Activated CD8-positive, alpha-beta T cell treated with anti-CD3 and anti-CD28 coated beads, Interleukin-2, amount 10 ng/mL, durations not matched to agents 7 days and 5 days (primary cell): ENCODE measurements at regions of chr18 and their contacts with region 1.

Region 1: DNA sequence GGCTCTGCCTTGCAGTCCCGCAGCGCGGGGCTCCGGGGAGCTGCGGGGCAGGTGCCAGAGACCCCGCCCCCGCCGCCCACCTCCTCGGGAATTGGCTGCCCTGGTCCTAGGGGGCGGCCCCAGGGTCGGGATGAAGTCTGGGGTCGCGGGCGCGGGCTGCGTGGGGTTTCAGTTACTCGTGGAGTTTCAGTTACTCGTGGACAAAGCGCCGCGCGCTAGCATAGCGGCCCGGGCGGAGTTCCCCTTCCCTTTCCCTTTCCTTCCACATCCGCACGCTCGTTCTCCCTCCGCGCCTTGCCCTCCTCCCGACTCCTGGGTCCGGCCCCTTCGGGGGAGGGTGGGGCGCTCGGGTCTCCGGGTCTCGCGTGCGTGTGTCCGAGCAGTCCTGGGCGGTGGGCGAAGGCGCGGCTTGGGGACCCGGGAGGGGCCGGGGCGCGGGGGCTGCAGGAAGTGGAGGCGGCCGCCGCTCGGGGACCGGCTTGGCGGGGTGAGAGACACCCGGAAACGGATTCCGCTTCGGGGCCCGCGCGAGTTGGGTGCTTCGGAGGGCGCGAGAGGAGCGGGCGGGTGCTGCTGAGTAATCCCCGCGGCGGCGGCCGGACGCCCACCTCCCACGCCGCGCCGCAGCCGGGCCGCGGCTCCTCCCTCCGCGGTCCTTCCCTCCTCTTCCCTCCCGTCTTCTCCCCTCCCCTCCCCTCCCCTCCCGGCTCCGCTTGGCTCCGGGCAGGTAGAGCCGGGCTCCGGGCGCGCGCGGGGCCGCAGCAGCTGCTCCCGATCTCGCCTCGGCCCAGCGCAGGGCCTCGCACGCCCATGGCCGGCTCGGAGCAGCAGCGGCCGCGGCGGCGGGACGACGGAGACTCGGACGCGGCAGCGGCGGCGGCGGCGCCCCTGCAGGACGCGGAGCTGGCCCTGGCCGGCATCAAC is at the start of gene TTC39C:
- DNase-seq: peak; percentile 89
- ATAC-seq: peak; percentile 73
- H3K4me3 Mint-ChIP-seq: peak within 1 kb of the TSS; percentile 95
- H3K27ac Mint-ChIP-seq: peak within 1 kb of the TSS; percentile 91
- H3K4me1 Mint-ChIP-seq: peaks cover 75% of the 10 kb centered on the region
- H3K27me3 Mint-ChIP-seq: no peaks in the 10 kb centered on the region
- total RNA-seq, gene TTC39C: 71.5 to 72.2 TPM

Region 2: DNA sequence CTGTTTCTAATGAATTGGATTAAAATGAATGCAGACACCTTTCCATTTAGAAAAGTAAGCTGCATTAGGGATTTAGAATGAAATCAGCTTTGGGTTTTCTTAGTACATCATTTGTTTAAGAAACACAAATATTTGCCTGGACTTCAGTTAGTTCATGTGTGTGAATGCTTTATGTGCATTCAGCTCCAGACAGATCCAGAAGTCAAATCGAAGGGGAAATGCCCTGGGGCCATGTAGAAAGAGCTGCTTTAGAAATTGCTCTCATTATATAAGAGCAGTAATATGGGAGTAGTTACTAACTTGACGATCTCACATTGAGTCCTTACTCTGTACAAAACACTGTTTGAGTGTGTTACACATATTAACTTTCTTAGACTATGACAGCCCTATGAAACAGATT is 87.8 kb before region 1 on chr18:
- CTCF ChIA-PET with region 1: interaction called, 3 read pairs
- POLR2A ChIA-PET with region 1: interaction called, 11 read pairs
- DNase-seq: no peak
- ATAC-seq: no peak
- H3K4me3 Mint-ChIP-seq: no peak overlapping the region
- H3K27ac Mint-ChIP-seq: no peak overlapping the region
- H3K4me1 Mint-ChIP-seq: peaks cover 44% of the 10 kb centered on the region
- H3K27me3 Mint-ChIP-seq: no peaks in the 10 kb centered on the region

Region 3: DNA sequence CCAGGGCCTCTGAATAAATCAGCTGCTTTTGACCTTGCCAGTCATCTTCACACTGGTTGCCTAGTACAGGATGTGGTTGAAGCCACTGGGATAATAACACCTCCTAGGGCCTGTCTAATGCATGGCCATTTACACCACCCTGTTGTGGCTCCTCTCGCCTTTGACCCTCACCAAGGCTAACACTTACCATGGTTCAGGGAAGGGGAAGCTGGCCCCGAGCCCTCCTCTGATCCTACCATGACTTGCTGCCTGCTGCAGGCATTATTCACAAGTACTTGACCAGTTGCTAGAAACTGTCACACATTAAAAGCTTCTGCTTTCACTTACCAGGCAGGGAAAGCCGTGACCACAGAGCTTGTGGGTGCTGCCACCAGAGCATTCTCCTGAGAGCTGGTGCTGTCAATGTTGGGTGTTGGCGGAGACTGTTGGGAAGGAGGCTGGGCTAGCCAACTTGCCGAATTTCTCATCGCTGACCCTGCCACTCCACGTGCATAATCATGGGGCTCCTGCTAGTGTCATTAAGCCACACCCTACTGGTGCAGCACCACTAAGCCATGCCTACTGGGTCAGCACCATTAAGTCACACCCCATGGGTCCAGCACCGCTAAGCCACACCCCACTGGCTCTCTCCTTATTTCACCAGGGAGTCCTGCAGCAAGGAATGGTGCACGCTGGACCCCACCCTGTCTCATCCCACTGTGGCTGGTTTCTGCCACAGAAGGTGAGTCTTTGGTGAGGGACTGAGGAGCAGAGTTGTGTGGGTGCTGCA is 46.8 kb before region 1 on chr18:
- CTCF ChIA-PET with region 1: interaction called, 20 read pairs
- POLR2A ChIA-PET with region 1: interaction called, 30 read pairs
- DNase-seq: peak; percentile 60
- ATAC-seq: peak; percentile 50
- H3K4me3 Mint-ChIP-seq: peak overlapping the region; percentile 38
- H3K27ac Mint-ChIP-seq: peak overlapping the region; percentile 71
- H3K4me1 Mint-ChIP-seq: peaks cover 77% of the 10 kb centered on the region
- H3K27me3 Mint-ChIP-seq: no peaks in the 10 kb centered on the region

Region 4: DNA sequence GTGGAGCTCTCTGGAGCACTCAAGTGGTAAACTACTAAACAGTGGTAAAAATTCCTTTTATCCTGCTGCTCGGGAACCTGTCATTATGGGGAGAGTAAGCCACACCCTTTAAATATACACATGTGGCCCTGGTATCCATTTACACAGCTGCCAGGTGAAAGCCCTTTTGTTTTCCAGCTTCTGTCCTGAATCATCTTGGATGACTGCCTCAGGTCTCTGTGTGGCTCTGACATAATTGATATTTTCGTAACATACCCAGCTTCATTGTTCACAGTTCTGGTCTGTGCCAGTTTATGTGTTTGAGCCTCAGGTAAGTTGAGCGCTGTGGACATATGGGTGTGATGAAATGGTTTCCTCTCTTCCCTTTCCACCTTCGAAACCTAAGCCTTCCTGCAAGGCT is 15.5 kb before region 1 on chr18:
- CTCF ChIA-PET with region 1: interaction called, 21 read pairs
- POLR2A ChIA-PET with region 1: interaction called, 3 read pairs
- DNase-seq: no peak
- ATAC-seq: no peak
- H3K4me3 Mint-ChIP-seq: no peak overlapping the region
- H3K27ac Mint-ChIP-seq: no peak overlapping the region
- H3K4me1 Mint-ChIP-seq: peaks cover 63% of the 10 kb centered on the region
- H3K27me3 Mint-ChIP-seq: no peaks in the 10 kb centered on the region